Lower leg skin (tissue), 4 donors: ENCODE measurements at regions of chr3 and their contacts with region 1.

Region 1: DNA sequence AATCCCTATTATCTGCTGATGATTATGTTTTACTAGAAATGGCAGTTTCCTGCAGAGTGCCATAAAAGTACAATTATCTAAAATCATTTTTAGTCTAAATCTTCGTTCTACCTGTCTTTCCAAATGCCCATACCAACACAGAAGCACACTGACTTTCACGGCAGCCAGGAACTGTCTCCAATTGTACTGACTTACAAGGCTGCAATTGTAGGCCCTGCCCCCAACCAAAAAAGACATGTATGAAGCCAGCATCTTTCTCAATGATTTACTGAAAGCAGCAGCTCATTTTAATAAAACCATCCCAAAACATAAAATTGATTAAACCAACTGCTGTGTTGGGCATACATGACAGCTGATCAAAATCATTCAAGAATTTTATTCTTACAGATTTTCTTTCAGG is 119.0 kb downstream of the TBC1D5 start:
- DNase-seq: no peak
- H3K4me3 ChIP-seq: no peak overlapping the region
- CTCF ChIP-seq: no peak
- POLR2A ChIP-seq: no peak

Region 2: DNA sequence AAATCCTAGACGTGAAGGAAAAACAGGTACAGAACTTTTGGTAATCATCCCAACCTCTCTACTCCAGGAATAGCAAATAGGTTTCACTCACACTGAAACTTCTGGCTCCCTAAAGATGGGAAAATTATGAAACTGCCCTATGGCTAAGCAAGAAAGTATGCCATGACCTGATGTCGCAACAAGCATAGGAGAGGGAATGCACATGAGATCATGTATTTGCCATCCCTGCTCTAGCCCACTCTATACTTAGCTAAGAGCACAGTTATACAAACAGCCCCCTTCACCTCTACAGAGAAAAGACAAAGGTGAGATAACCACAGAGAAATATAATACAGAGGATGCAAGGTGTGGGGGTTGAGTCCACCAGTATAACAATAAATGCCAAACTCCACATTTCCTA is 16.3 kb after region 1 on chr3:
- intact Hi-C with region 1: loop called (anchors 2 kb)
- DNase-seq: peak in 1 of 2 donors; percentile 18
- H3K4me3 ChIP-seq: no peak overlapping the region
- CTCF ChIP-seq: no peak
- POLR2A ChIP-seq: no peak